ENCODE measurements at regions of chr11 and their contacts with region 1.

Region 1: DNA sequence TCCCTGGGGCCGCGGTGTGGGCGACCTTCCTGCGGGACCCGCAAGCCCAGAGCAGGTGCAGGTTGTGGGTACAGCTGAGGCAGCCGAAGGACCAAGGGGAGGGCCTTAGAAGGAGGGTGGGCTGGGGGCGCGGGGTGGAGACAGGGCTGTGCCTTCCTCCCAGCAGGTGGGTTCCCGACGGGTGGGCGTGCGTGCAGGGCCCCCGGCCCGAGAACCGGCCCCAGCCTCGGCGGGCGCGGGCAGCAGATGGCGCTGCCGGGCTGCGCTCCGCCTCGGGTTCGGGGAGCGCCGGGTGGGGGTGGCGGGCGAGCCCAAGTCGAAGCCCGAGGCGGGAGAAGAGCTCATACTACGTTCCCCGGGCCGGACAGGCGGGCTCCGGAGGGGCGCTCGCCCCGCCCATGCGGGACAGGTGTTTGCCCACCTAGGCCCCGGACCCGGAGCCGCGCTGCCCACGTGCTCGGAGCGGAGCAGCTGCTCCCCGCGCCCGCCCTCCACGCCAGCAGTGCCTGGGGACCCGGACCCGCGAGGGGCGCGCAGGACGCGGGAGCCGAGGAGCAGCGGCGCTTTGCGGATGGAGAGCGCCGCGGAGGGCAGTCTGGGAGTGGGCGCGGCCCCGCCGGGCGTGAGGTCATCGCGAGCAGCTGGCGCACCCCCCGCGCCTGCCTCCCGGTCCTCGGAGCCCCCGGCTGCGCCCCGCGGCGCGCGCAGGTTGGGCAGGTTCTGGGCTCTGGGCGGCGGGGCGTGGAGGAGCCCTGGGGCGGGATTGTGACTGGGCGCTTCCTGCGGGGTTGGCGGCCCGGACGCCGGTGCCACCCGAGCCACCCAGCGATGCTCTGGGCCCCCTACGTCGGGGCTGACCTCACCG is 25.3 kb downstream of the DUSP8 start:
- DNase-seq: peak; percentile 73
- ATAC-seq: peak; percentile 63
- H3K4me3 Mint-ChIP-seq: peak overlapping the region; percentile 53
- H3K27ac Mint-ChIP-seq: no peak overlapping the region
- H3K4me1 Mint-ChIP-seq: peaks cover 4% of the 10 kb centered on the region; the same call in 1 of the 2 replicates
- H3K27me3 Mint-ChIP-seq: peaks cover 59% of the 10 kb centered on the region
- CTCF ChIP-seq: peak; percentile 76

Region 2: GRCh38 chr11:1373536-1374214 is 173.1 kb before region 1 on chr11:
- CTCF ChIA-PET with region 1: no interaction called
- POLR2A ChIA-PET with region 1: no interaction called
- DNase-seq: no peak
- ATAC-seq: no peak
- H3K4me3 Mint-ChIP-seq: no peak overlapping the region
- H3K27ac Mint-ChIP-seq: no peak overlapping the region
- H3K4me1 Mint-ChIP-seq: no peaks in the 10 kb centered on the region
- H3K27me3 Mint-ChIP-seq: peaks cover 6% of the 10 kb centered on the region; the same call in 1 of the 2 replicates
- CTCF ChIP-seq: no peak

Region 3: GRCh38 chr11:1505480-1505879 is 41.3 kb before region 1 on chr11:
- CTCF ChIA-PET with region 1: interaction called, 10 read pairs
- POLR2A ChIA-PET with region 1: no interaction called
- DNase-seq: peak; percentile 51
- ATAC-seq: peak; percentile 87
- H3K4me3 Mint-ChIP-seq: no peak overlapping the region
- H3K27ac Mint-ChIP-seq: no peak overlapping the region
- H3K4me1 Mint-ChIP-seq: peaks cover 8% of the 10 kb centered on the region
- H3K27me3 Mint-ChIP-seq: no peaks in the 10 kb centered on the region
- CTCF ChIP-seq: no peak

Region 4: DNA sequence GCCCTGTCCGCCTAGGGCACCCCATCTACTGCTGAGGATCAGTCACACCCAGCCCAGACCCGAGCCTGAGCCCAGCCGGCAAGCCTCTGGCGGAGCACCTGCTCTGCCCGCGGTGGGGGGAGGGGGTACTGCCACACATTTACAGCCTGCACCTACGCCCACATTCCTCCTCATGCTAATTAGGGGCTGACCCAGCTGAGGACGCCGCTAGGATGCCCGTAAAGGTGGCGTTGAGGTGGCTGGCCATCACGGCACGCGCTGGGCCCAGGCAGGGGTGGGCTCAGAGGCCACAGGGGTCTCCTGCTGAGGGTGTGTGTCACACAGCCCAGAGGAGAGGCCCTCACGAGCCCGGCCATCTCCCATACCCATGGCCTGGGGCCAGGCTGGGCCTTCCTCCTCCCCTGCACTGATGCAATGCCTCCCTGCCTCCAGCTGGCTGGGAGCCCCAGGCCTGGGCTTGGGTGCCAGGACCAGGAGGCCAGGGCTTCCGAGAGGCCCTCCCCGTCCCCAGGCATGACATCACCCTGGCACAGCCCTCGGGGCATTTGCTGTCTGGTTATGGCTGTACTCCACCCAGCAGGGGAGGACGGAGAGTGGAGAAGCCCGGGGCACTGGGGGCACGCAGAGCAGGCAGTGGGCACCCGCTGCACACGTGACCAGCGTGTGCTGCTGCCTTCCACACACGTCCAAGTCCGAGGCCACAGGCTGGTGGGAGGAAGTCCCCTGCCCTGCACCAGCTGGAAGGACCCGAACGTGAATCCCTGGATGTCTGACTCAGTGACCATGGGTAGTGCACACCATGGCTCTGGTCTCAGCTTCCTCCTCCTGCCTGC is 12.6 kb after region 1 on chr11:
- CTCF ChIA-PET with region 1: interaction called, 72 read pairs
- POLR2A ChIA-PET with region 1: interaction called, 9 read pairs
- DNase-seq: peak; percentile 75
- ATAC-seq: peak; percentile 41
- H3K4me3 Mint-ChIP-seq: no peak overlapping the region
- H3K27ac Mint-ChIP-seq: no peak overlapping the region
- H3K4me1 Mint-ChIP-seq: peaks cover 20% of the 10 kb centered on the region
- H3K27me3 Mint-ChIP-seq: peaks cover 56% of the 10 kb centered on the region
- CTCF ChIP-seq: no peak

Region 5: DNA sequence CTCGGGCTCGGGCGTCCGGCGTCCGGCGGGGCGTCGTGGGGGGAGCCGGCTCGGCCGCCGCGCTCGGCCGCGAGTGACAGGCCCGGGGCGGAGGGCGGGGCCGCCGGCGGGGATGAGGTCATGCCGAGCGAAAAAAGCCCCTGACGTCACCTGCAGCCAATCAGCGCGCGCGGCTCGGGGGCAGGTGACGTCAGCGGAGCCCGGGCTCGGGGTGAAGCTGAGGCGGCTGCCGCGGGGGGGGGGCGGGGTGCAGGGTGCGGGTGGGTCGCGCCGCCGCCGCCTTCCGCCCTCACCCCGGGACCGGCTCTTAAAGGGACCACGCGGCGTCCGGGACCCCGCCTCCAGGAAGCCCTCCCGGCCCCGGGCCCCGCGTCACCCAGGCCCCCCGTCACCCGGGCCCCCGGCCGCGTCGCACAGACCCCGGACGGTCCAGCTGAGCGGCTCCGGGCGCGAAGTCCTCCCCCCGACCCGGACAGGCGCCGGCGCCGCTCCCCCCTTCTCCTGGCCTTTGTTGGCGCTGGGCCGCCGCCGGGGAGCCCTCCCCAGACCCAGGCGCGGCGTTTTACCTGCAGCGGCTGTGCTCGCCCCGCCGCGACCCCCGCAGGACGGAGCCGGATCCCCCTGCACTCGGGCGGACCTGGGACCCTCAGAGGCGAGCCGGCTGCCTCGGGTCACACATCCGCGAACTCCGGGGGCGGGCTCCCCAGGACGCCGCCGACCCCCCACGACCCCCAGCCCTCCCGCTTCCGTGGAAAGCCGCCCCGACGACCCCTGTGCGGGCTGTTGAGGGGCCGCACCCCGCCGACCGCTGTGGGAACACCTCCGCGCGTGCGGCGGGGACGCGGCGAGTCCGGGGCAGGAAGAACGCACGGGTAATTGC is 25.7 kb after region 1 on chr11 and contains the start of gene DUSP8:
- CTCF ChIA-PET with region 1: interaction called, 457 read pairs
- POLR2A ChIA-PET with region 1: interaction called, 24 read pairs
- DNase-seq: peak; percentile 81
- ATAC-seq: peak; percentile 8
- H3K4me3 Mint-ChIP-seq: peak within 1 kb of the TSS; percentile 36; the same call in 1 of the 2 replicates
- H3K27ac Mint-ChIP-seq: no peak within 1 kb of the TSS
- H3K4me1 Mint-ChIP-seq: peaks cover 13% of the 10 kb centered on the region
- H3K27me3 Mint-ChIP-seq: peaks cover 66% of the 10 kb centered on the region
- CTCF ChIP-seq: no peak
- total RNA-seq, gene DUSP8: 1.7 to 2.5 TPM (median 2.4 TPM) in 3 replicates

Region 6: DNA sequence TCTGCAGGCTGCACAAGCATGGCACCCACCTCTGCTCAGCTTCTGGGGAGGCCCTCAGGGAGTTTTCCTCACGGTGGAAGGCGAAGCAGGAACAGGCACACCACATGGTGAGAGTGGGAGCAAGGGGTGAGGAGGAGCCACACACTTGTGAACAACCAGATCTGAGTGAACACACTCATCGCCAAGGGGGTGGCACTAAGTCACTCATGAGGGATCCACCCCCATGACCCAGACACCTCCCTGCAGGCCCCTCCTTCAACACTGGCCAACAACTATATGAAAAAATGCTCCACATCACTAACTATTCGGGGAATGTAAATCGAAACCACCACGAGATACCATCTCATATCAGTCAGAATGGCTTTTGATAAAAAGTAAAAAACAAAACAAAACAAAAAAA is 52.0 kb after region 1 on chr11:
- CTCF ChIA-PET with region 1: interaction called, 98 read pairs
- POLR2A ChIA-PET with region 1: interaction called, 7 read pairs
- DNase-seq: no peak
- ATAC-seq: no peak
- H3K4me3 Mint-ChIP-seq: no peak overlapping the region
- H3K27ac Mint-ChIP-seq: no peak overlapping the region
- H3K4me1 Mint-ChIP-seq: peaks cover 35% of the 10 kb centered on the region
- H3K27me3 Mint-ChIP-seq: peaks cover 57% of the 10 kb centered on the region
- CTCF ChIP-seq: no peak

Region 7: GRCh38 chr11:1628506-1629325 is 81.9 kb after region 1 on chr11:
- CTCF ChIA-PET with region 1: interaction called, 19 read pairs
- POLR2A ChIA-PET with region 1: no interaction called
- DNase-seq: peak; percentile 80
- ATAC-seq: peak; percentile 97
- H3K4me3 Mint-ChIP-seq: no peak overlapping the region
- H3K27ac Mint-ChIP-seq: no peak overlapping the region
- H3K4me1 Mint-ChIP-seq: peaks cover 16% of the 10 kb centered on the region
- H3K27me3 Mint-ChIP-seq: peaks cover 41% of the 10 kb centered on the region
- CTCF ChIP-seq: peak; percentile 91

Region 8: GRCh38 chr11:1640076-1640946 is 93.5 kb after region 1 on chr11:
- CTCF ChIA-PET with region 1: interaction called, 12 read pairs
- POLR2A ChIA-PET with region 1: no interaction called
- DNase-seq: peak; percentile 74
- ATAC-seq: peak; percentile 94
- H3K4me3 Mint-ChIP-seq: no peak overlapping the region
- H3K27ac Mint-ChIP-seq: no peak overlapping the region
- H3K4me1 Mint-ChIP-seq: peaks cover 3% of the 10 kb centered on the region
- H3K27me3 Mint-ChIP-seq: peaks cover 4% of the 10 kb centered on the region
- CTCF ChIP-seq: peak; percentile 83

Region 9: GRCh38 chr11:1749414-1750312 is 202.9 kb after region 1 on chr11:
- CTCF ChIA-PET with region 1: no interaction called
- POLR2A ChIA-PET with region 1: no interaction called
- DNase-seq: no peak
- ATAC-seq: peak; percentile 6
- H3K4me3 Mint-ChIP-seq: peak overlapping the region; percentile 57
- H3K27ac Mint-ChIP-seq: no peak overlapping the region
- H3K4me1 Mint-ChIP-seq: peaks cover 12% of the 10 kb centered on the region
- H3K27me3 Mint-ChIP-seq: peaks cover 51% of the 10 kb centered on the region
- CTCF ChIP-seq: no peak

Measured in WTC11 (cell line).